HEK293 (cell line): ENCODE measurements at regions of chr10 and their contacts with region 1.

Region 1: DNA sequence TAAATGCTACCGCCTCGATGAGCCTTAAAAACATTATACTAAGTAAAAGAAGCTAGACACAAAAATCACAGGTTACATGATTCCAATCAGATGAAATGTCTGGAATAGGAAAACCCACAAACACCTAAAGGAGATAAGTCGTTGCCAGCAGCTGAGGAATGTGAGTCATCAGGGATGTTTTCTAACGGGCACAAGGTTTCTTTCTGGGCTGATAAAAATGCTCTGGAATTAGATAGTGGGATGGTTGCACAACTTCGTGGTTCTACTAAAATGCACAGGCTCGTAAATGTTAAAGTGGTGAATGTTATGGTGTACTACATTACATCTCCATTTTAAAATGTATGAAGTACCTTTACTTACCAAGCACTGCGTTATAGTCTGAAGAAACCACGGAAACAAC is 9.7 kb downstream of the ABLIM1 start:
- H3K4me3 ChIP-seq: no peak overlapping the region
- H3K27ac ChIP-seq: no peak overlapping the region; the same call in 1 of the 2 replicates
- H3K4me1 ChIP-seq: peaks cover 19% of the 10 kb centered on the region
- CTCF ChIP-seq: no peak

Region 2: GRCh38 chr10:114412907-114413386 is 235.4 kb before region 1 on chr10:
- CTCF ChIA-PET with region 1: no interaction called
- POLR2A ChIA-PET with region 1: no interaction called
- H3K4me3 ChIP-seq: no peak overlapping the region
- H3K27ac ChIP-seq: no peak overlapping the region
- H3K4me1 ChIP-seq: no peaks in the 10 kb centered on the region
- CTCF ChIP-seq: no peak

Region 3: GRCh38 chr10:114631666-114632417 is 16.5 kb before region 1 on chr10:
- CTCF ChIA-PET with region 1: interaction called, 9 read pairs
- POLR2A ChIA-PET with region 1: interaction called, 10 read pairs
- H3K4me3 ChIP-seq: peak overlapping the region; percentile 47
- H3K27ac ChIP-seq: peak overlapping the region; percentile 54; the same call in 1 of the 2 replicates
- H3K4me1 ChIP-seq: peaks cover 27% of the 10 kb centered on the region
- CTCF ChIP-seq: peak; percentile 39; the same call in 1 of the 2 replicates

Region 4: DNA sequence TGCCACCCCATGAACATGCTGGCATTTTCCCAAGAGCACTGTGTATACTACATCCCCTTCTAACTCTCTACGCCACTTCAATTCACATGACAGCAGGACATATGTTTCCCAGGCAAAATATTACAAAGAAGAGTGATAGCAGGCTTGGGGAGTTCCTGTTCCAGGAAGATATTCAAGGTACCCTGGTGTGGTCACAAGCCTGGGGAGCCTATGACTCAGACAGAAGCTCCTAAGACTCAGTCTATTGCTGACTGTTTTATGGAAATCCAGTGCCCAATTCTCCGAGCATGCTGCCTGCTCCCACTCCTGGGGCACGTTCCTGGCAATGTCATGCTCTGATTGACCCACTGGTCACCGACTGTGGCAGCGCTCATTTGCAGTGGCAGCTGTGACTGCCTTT is 33.2 kb after region 1 on chr10:
- CTCF ChIA-PET with region 1: no interaction called
- POLR2A ChIA-PET with region 1: no interaction called
- H3K4me3 ChIP-seq: no peak overlapping the region
- H3K27ac ChIP-seq: no peak overlapping the region
- H3K4me1 ChIP-seq: peaks cover 49% of the 10 kb centered on the region
- CTCF ChIP-seq: no peak

Region 5: GRCh38 chr10:114729103-114729659 is 80.8 kb after region 1 on chr10:
- CTCF ChIA-PET with region 1: no interaction called
- POLR2A ChIA-PET with region 1: no interaction called
- H3K4me3 ChIP-seq: no peak overlapping the region
- H3K27ac ChIP-seq: no peak overlapping the region
- H3K4me1 ChIP-seq: peaks cover 10% of the 10 kb centered on the region
- CTCF ChIP-seq: no peak